ENCODE measurements at regions of chr2 and their contacts with region 1.

Region 1: DNA sequence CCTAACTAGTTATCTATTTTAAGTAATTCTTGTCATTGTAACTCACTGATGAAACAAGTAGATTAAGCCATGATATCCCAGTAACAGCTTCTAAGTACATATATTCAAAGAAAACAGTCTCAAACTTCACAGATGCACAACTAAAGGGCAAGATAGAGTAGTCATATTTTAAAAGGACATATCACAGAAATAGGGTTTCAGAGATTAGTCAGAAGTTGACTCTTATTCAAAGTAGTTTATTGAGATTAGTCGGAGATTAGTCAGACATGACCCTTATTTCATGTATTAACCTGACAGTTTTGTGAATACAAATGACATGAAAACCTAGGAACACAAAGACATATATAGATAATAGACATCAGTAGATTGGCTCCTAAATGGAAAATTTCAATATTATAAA is 15.9 kb upstream of the CHAC2 start:
- DNase-seq: no peak
- H3K4me3 Mint-ChIP-seq: peak overlapping the region; percentile 23
- H3K27ac Mint-ChIP-seq: peak overlapping the region; percentile 77
- H3K4me1 Mint-ChIP-seq: peaks cover 36% of the 10 kb centered on the region
- H3K27me3 Mint-ChIP-seq: no peaks in the 10 kb centered on the region

Region 2: GRCh38 chr2:53724536-53724935 is 27.2 kb before region 1 on chr2:
- intact Hi-C with region 1: loop called (anchors 2 kb)
- DNase-seq: no peak
- H3K4me3 Mint-ChIP-seq: peak overlapping the region; percentile 3
- H3K27ac Mint-ChIP-seq: peak overlapping the region; percentile 39
- H3K4me1 Mint-ChIP-seq: peaks cover 22% of the 10 kb centered on the region
- H3K27me3 Mint-ChIP-seq: no peaks in the 10 kb centered on the region

Region 3: GRCh38 chr2:53767405-53768241 is 15.9 kb after region 1 on chr2 and contains the start of gene CHAC2:
- intact Hi-C with region 1: loop called (anchors 1 kb)
- DNase-seq: peak; percentile 81
- H3K4me3 Mint-ChIP-seq: peak within 1 kb of the TSS; percentile 90
- H3K27ac Mint-ChIP-seq: peak within 1 kb of the TSS; percentile 95
- H3K4me1 Mint-ChIP-seq: peaks cover 26% of the 10 kb centered on the region
- H3K27me3 Mint-ChIP-seq: no peaks in the 10 kb centered on the region
- total RNA-seq, gene CHAC2: 22.4 and 25.3 TPM in 2 replicates

Region 4: DNA sequence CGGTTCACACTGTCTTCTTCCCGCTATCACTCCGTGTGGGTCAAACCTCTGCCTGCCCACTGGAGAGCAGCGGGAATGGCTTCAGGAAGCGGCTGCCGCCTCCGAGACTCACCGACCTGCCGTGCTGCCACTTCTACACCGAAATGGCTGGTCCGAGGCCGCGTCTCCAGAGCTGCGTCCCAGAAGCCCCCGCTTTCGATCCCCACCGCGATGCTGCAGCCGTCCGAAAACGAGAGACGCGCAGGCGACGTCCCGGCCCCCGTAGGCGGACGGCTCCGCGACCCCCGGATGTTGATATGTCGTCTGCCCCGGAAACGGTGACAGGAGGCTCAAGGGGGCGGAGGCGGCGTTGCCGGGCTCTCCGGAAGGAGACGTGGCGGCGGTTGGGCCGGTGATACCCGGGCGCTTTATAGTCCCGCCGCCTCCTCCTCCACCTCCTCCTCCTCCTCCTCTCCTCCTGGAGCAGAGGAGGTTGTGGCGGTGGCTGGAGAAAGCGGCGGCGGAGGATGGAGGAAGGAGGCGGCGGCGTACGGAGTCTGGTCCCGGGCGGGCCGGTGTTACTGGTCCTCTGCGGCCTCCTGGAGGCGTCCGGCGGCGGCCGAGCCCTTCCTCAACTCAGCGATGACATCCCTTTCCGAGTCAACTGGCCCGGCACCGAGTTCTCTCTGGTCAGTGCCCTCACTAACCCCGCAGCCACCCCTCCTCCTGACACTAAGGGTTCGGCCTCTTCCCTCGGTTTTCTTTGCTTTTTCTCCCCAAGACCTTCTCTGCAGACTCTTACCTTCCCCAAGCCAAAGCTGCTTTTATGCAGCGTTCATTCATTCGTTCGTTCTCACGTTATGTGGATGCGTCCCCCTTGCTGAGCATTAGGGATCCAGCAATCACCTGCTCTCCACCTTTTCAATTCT is 35.2 kb after region 1 on chr2 and contains the starts of genes ASB3 and ERLEC1:
- intact Hi-C with region 1: loop called (anchors 1 kb)
- DNase-seq: peak; percentile 87
- H3K4me3 Mint-ChIP-seq: peak within 1 kb of the TSS; percentile 99
- H3K27ac Mint-ChIP-seq: peak within 1 kb of the TSS; percentile 97
- H3K4me1 Mint-ChIP-seq: peaks cover 38% of the 10 kb centered on the region
- H3K27me3 Mint-ChIP-seq: no peaks in the 10 kb centered on the region
- total RNA-seq, gene ASB3: 24.3 and 26.4 TPM in 2 replicates
- total RNA-seq, gene ERLEC1: 36.0 and 36.2 TPM in 2 replicates

Region 5: DNA sequence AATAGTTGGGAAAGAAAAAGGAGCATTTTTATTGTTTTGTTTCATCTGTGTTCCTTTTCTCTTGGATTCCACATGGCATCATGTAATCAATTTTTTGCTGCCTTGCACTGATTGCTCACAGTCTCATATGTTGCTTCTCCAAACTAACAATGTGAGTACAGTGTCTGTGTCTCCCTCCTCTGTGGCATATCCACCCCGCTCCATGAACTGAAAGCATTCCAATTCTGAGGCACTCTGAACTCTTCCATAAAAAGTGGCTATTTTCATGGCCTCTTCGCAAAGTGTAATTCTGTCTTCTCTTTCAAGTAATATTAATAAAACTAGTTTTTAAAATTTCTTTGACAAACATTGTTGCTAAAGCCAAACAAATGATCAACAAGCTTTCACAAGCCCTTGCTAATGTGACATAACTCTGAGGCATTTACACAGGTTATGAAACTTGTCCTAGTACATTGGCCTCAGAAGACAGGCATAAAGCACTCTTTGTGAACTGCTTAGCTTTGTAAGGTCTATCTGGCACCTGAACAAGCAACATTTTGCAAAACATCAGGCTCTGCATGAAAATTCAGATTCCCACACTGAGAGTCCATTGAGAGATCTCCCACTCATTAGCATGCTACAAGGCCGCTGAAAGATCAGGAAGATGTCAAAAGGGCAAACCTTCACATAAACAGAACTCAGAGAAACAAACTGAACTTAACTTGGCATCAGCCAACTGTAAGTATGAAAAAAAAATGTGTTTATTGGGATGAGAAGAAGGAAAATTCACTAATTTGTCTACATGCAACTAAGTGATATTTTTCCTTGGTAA is 75.1 kb after region 1 on chr2:
- intact Hi-C with region 1: no loop called
- DNase-seq: no peak
- H3K4me3 Mint-ChIP-seq: no peak overlapping the region
- H3K27ac Mint-ChIP-seq: no peak overlapping the region
- H3K4me1 Mint-ChIP-seq: no peaks in the 10 kb centered on the region
- H3K27me3 Mint-ChIP-seq: no peaks in the 10 kb centered on the region

Region 6: DNA sequence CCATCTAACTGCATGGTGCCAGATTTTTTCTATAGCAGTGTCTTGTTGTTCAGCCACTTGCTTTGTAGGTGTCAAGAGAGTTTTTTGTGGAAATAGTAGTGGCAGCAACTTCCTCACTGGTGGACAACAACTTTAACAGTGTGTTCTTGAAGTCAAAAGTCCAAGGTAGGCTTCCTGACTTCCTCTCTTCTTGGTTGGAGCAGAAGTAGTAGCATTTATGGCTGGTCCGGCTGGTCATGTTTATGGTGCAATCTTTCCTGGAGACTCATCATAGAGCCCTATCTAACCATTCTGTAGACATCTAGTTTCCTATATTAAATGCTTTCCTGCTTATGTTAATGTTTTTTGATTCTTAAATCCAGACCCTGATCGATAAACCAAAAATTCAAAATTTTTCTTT is 96.3 kb after region 1 on chr2:
- intact Hi-C with region 1: no loop called
- DNase-seq: no peak
- H3K4me3 Mint-ChIP-seq: no peak overlapping the region
- H3K27ac Mint-ChIP-seq: no peak overlapping the region
- H3K4me1 Mint-ChIP-seq: no peaks in the 10 kb centered on the region
- H3K27me3 Mint-ChIP-seq: no peaks in the 10 kb centered on the region

Region 7: DNA sequence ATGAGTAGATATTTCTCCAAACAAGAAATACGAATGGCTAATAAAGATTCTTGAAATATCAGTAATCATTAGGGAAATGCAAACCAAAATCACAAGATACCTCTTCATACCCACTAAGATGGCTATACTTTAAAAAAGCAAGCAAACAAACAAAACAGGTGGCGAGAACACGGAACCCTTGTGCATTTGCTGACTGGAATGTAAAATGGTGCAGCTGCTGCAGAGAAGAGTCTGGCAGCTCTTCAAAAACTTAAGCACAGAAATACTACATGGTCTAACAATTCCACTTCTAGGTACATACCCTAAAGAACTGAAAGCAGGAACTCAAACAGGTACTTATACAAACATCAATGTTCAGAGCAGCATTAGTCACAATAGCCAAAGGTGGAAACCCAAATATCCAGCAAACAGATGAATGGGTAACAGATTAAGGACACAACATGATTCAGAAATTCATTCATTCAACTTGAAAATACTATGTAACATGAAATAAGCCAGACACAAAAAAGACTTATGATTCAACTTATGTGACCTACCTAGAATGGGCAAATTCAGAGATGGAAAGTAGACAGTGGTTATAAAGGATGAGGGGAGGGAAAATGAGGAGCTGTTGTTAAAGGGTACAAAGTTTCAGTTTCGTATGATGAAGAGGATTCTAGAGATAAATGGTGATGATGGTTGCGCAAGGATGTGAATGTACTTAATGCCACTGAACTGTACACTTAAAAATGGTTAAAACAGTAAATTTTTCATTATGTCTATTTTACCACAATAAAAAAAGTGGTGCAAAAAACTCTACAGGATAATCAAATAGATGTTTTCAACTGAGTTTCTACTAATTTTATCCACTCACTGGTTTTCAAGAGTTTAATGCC is 134.9 kb after region 1 on chr2:
- intact Hi-C with region 1: loop called (anchors 1 kb)
- DNase-seq: no peak
- H3K4me3 Mint-ChIP-seq: no peak overlapping the region
- H3K27ac Mint-ChIP-seq: peak overlapping the region; percentile 47
- H3K4me1 Mint-ChIP-seq: peaks cover 43% of the 10 kb centered on the region
- H3K27me3 Mint-ChIP-seq: no peaks in the 10 kb centered on the region